ENCODE measurements at regions of chrX and their contacts with region 1.

Region 1: GRCh38 chrX:24024819-24025740 is 1.9 kb downstream of the KLHL15 start:
- DNase-seq: peak; percentile 86
- ATAC-seq: peak; percentile 83
- H3K4me3 ChIP-seq: peak overlapping the region; percentile 97
- H3K27ac ChIP-seq: peak overlapping the region; percentile 78
- H3K4me1 ChIP-seq: peaks cover 12% of the 10 kb centered on the region; the same call in 1 of the 2 replicates
- H3K27me3 ChIP-seq: no peaks in the 10 kb centered on the region
- CTCF ChIP-seq: no peak

Region 2: DNA sequence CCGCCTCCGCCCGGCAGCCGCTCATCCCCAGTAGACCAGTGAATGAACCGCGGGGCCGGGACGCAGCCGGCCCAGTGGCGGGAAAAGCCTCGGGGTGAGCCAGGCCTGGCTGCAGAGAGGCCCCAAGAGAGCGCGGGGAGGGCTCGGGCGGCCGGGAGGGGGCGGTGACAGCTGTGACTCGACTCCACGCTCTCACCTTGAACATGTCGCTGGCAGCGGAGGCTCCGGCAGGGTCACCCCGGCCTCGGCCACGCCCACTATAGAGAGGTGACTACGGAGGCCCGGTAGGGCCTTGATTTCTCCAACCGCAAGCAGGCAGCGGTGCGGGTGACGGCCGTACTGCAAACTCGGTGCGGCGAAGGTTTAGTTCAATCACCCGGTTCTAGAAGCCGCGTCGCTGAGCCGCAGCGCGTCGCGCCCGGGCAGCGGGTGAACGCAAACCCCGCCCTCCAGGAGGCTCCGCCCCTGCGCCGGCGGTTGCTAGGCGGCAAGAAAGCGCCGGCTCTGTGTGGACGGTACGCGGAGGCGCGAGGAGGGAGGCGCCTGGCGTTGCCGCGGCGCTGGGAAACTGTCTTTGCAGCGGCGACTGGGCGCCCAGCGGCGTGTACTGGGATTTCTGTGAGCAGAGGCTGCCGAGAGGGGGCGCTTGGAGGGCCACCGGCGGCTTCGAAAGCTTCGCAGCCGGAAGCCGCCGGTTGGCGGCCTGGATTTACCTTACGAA is 117.4 kb before region 1 on chrX and contains the starts of genes APOO and CXorf58:
- CTCF ChIA-PET with region 1: interaction called, 4 read pairs
- POLR2A ChIA-PET with region 1: no interaction called
- intact Hi-C with region 1: loop called (anchors 1 kb)
- DNase-seq: peak; percentile 93
- ATAC-seq: peak; percentile 95
- H3K4me3 ChIP-seq: peak within 1 kb of the TSS; percentile 95
- H3K27ac ChIP-seq: peak within 1 kb of the TSS; percentile 79
- H3K4me1 ChIP-seq: peaks cover 12% of the 10 kb centered on the region
- H3K27me3 ChIP-seq: no peaks in the 10 kb centered on the region
- CTCF ChIP-seq: peak; percentile 69
- total RNA-seq, gene APOO: 30.4 and 34.0 TPM in 2 replicates
- total RNA-seq, gene CXorf58: not detected in 2 replicates

Region 3: GRCh38 chrX:23930894-23931689 is 94.0 kb before region 1 on chrX:
- CTCF ChIA-PET with region 1: no interaction called
- POLR2A ChIA-PET with region 1: no interaction called
- intact Hi-C with region 1: loop called (anchors 10 kb)
- DNase-seq: peak; percentile 16
- ATAC-seq: peak; percentile 43
- H3K4me3 ChIP-seq: no peak overlapping the region
- H3K27ac ChIP-seq: no peak overlapping the region
- H3K4me1 ChIP-seq: peaks cover 8% of the 10 kb centered on the region
- H3K27me3 ChIP-seq: no peaks in the 10 kb centered on the region
- CTCF ChIP-seq: no peak

Measured in PC-3 (cell line).